ENCODE measurements at regions of chr6 and their contacts with region 1.

Region 1: GRCh38 chr6:14270925-14271791 is 153.6 kb downstream of the CD83 start:
- DNase-seq: peak in 8 of 9 donors; percentile 21 to 64 (median 31)
- ATAC-seq: peak; percentile 81
- H3K4me3 ChIP-seq: no peak overlapping the region
- H3K4me3 Mint-ChIP-seq: peak overlapping the region in 8 of 10 donors; percentile 16 to 78 (median 56)
- H3K27ac ChIP-seq: no peak overlapping the region
- H3K27ac Mint-ChIP-seq: peak overlapping the region in 7 of 9 donors; percentile 23 to 88 (median 60)
- H3K4me1 ChIP-seq: peaks cover 5 to 39% of the 10 kb centered on the region in 2 donors
- H3K4me1 Mint-ChIP-seq: peaks cover 24 to 61% (median 48%) of the 10 kb centered on the region in 7 donors
- H3K27me3 ChIP-seq: no peaks in the 10 kb centered on the region
- H3K27me3 Mint-ChIP-seq: no peaks in the 10 kb centered on the region

Region 2: DNA sequence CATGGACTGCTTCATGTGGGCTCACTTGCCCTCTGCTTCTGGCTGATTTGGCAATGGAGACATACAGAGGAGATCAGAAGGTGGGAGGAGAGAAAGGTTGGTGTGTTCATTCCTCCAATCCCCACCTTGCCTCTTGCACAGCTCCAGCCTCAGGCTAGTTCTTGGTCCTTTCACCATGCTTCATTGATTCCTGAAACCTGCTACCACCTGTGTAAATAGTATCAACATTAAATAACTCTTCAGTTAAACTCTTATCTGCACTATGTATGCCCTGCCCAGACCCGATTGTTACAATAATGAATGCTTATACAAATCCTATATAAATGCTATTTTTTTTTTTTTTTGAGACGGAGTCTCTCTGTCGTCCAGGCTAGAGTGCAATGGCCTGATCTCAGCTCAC is 21.0 kb after region 1 on chr6:
- CTCF ChIA-PET with region 1: no interaction called
- POLR2A ChIA-PET with region 1: interaction called, 11 read pairs
- intact Hi-C with region 1: no loop called
- DNase-seq: no peak
- ATAC-seq: no peak
- H3K4me3 ChIP-seq: no peak overlapping the region
- H3K4me3 Mint-ChIP-seq: no peak overlapping the region
- H3K27ac ChIP-seq: no peak overlapping the region
- H3K27ac Mint-ChIP-seq: no peak overlapping the region
- H3K4me1 ChIP-seq: no peaks in the 10 kb centered on the region
- H3K4me1 Mint-ChIP-seq: peaks cover 7 to 15% (median 13%) of the 10 kb centered on the region in 7 donors
- H3K27me3 ChIP-seq: no peaks in the 10 kb centered on the region
- H3K27me3 Mint-ChIP-seq: peaks cover 0 to 3% (median 0%) of the 10 kb centered on the region in 5 donors

Region 3: GRCh38 chr6:14316635-14317386 is 45.7 kb after region 1 on chr6:
- CTCF ChIA-PET with region 1: no interaction called
- POLR2A ChIA-PET with region 1: no interaction called
- intact Hi-C with region 1: loop called in 1 of 2 experiments (anchors 2 kb)
- DNase-seq: peak in 3 of 9 donors; percentile 3 to 11 (median 9)
- ATAC-seq: no peak
- H3K4me3 ChIP-seq: no peak overlapping the region
- H3K4me3 Mint-ChIP-seq: no peak overlapping the region
- H3K27ac ChIP-seq: no peak overlapping the region
- H3K27ac Mint-ChIP-seq: peak overlapping the region in 3 of 9 donors; percentile 25 to 50 (median 35)
- H3K4me1 ChIP-seq: peaks cover 0 to 3% of the 10 kb centered on the region in 2 donors
- H3K4me1 Mint-ChIP-seq: peaks cover 4 to 22% (median 20%) of the 10 kb centered on the region in 7 donors
- H3K27me3 ChIP-seq: no peaks in the 10 kb centered on the region
- H3K27me3 Mint-ChIP-seq: peaks cover 0 to 4% (median 0%) of the 10 kb centered on the region in 5 donors

Region 4: GRCh38 chr6:14452567-14453527 is 181.7 kb after region 1 on chr6:
- CTCF ChIA-PET with region 1: no interaction called
- POLR2A ChIA-PET with region 1: no interaction called
- intact Hi-C with region 1: loop called (anchors 1 to 2 kb)
- DNase-seq: peak in 8 of 9 donors; percentile 22 to 66 (median 50)
- ATAC-seq: peak; percentile 77
- H3K4me3 ChIP-seq: peak overlapping the region; percentile 35
- H3K4me3 Mint-ChIP-seq: peak overlapping the region; percentile 56 to 81 (median 72)
- H3K27ac ChIP-seq: no peak overlapping the region
- H3K27ac Mint-ChIP-seq: peak overlapping the region; percentile 33 to 82 (median 68)
- H3K4me1 ChIP-seq: peaks cover 23 to 41% of the 10 kb centered on the region in 2 donors
- H3K4me1 Mint-ChIP-seq: peaks cover 45 to 73% (median 64%) of the 10 kb centered on the region in 7 donors
- H3K27me3 ChIP-seq: no peaks in the 10 kb centered on the region
- H3K27me3 Mint-ChIP-seq: no peaks in the 10 kb centered on the region